Natural killer cell (primary cell): ENCODE measurements at regions of chr20 and their contacts with region 1.

Region 1: GRCh38 chr20:49775229-49775693 is 37.4 kb upstream of the SLC9A8 start:
- DNase-seq: no peak
- ATAC-seq: no peak
- H3K4me3 ChIP-seq: no peak overlapping the region
- H3K4me3 Mint-ChIP-seq: no peak overlapping the region
- H3K27ac ChIP-seq: no peak overlapping the region
- H3K27ac Mint-ChIP-seq: peak overlapping the region in 1 of 2 donors; percentile 81
- H3K4me1 ChIP-seq: peaks cover 16% of the 10 kb centered on the region
- H3K4me1 Mint-ChIP-seq: peaks cover 9 to 17% of the 10 kb centered on the region in 2 donors
- H3K27me3 ChIP-seq: no peaks in the 10 kb centered on the region
- H3K27me3 Mint-ChIP-seq: no peaks in the 10 kb centered on the region
- CTCF ChIP-seq: no peak

Region 2: GRCh38 chr20:49724408-49725223 is 50.6 kb before region 1 on chr20:
- intact Hi-C with region 1: loop called (anchors 10 kb)
- DNase-seq: peak in 1 of 2 donors; percentile 24
- ATAC-seq: peak in 2 of 3 donors; percentile 47 to 69
- H3K4me3 ChIP-seq: no peak overlapping the region
- H3K4me3 Mint-ChIP-seq: no peak overlapping the region
- H3K27ac ChIP-seq: no peak overlapping the region
- H3K27ac Mint-ChIP-seq: peak overlapping the region; percentile 23 to 49
- H3K4me1 ChIP-seq: peaks cover 11% of the 10 kb centered on the region
- H3K4me1 Mint-ChIP-seq: peaks cover 12 to 16% of the 10 kb centered on the region in 2 donors
- H3K27me3 ChIP-seq: no peaks in the 10 kb centered on the region
- H3K27me3 Mint-ChIP-seq: no peaks in the 10 kb centered on the region
- CTCF ChIP-seq: no peak

Region 3: DNA sequence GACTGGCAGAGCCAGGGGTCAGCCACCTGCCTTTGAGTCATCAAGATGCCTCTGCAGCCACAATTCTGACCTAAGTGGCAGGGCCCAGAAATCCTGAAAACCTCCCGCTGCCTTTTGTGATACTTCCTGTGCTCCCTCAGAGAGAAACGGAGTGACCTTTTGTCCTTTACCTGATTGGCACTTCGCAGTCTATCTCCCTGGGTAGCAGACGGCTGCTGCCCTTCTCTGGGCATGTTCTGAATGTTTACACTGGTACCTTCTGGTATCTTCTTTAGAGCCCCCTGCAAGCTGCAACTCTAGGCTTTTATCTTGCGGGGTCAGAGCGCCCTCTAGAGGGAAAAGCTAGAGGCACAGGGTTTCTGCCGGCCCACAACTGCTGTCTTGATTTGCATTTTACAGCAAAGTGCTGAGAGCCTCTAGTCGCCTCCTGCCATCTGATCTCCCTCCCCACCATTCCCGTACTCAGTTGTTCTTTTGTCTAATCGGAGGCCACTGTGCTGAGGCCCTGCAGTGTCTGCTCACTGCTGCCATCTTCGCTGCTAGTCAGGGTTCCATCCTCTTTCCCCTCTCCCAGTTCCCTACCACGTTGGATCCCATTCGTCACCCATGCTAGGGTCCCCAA is 113.2 kb after region 1 on chr20:
- intact Hi-C with region 1: no loop called
- DNase-seq: peak in 1 of 2 donors; percentile 75
- ATAC-seq: peak in 2 of 3 donors; percentile 57 to 59
- H3K4me3 ChIP-seq: no peak overlapping the region
- H3K4me3 Mint-ChIP-seq: no peak overlapping the region
- H3K27ac ChIP-seq: no peak overlapping the region
- H3K27ac Mint-ChIP-seq: peak overlapping the region; percentile 69 to 70
- H3K4me1 ChIP-seq: peaks cover 14% of the 10 kb centered on the region
- H3K4me1 Mint-ChIP-seq: peaks cover 5 to 11% of the 10 kb centered on the region in 2 donors
- H3K27me3 ChIP-seq: no peaks in the 10 kb centered on the region
- H3K27me3 Mint-ChIP-seq: no peaks in the 10 kb centered on the region
- CTCF ChIP-seq: peak; percentile 71